ENCODE measurements at regions of chr10 and their contacts with region 1.

Region 1: GRCh38 chr10:22714479-22715289 is at the start of gene PIP4K2A:
- DNase-seq: peak; percentile 72
- H3K4me3 ChIP-seq: peak within 1 kb of the TSS; percentile 93 to 97 (median 97)
- H3K27ac ChIP-seq: peak within 1 kb of the TSS; percentile 65
- H3K4me1 ChIP-seq: peaks cover 14% of the 10 kb centered on the region
- H3K27me3 ChIP-seq: no peaks in the 10 kb centered on the region
- CTCF ChIP-seq: no peak
- total RNA-seq, gene PIP4K2A: 7.2 to 13.4 TPM

Region 2: DNA sequence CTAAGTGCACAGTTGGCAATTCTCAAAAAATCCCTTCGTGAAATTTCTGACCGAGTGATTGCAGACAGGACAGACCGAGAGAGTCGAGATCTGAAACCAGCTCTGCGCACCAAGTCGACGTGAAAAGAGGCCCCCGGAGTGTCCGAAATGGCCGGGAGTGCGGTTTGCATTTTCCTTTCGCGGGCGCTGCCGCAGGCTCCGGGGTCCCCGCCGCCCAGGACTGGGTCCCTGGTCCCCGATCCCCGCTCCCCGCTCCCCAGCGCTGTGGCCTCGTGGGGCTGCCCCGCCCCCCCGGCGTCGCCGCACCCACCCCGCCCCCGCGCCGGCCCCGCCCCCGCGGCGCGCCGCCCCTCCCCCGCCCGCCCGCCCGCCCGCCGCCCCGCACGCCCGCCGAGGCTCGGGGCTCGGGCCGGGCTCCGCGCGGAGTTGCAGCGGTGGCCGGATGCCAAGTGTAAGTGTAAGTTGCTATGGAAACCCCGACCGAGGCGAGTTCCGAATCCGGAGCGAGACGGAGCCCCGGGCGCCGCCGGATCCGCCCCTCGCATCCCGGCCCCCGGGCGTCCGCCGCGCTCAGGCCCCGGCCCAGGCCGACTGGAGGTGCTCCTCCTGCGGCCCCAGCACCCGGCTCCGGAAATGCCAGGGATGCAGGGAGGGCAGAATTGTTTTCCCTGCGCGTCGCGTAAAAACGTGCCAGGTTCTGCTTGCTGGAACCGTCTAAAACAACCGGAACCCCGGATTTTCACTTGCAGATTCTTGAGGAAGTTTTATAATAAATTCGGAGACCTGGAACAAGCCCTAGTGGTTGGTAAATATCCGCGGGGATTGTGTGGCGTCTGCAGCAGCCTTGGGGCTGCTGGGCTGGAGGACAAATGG is 389.2 kb before region 1 on chr10:
- CTCF ChIA-PET with region 1: no interaction called
- dilution Hi-C with region 1: no loop called
- in situ Hi-C with region 1: no loop called
- intact Hi-C with region 1: loop called (anchors 10 kb)
- DNase-seq: peak; percentile 60
- H3K4me3 ChIP-seq: peak overlapping the region; percentile 57 to 70 (median 65)
- H3K27ac ChIP-seq: peak overlapping the region; percentile 32
- H3K4me1 ChIP-seq: peaks cover 9% of the 10 kb centered on the region
- H3K27me3 ChIP-seq: peaks cover 12% of the 10 kb centered on the region
- CTCF ChIP-seq: peak in 1 of 2 donors; percentile 2

Region 3: GRCh38 chr10:22436884-22437619 is 277.6 kb before region 1 on chr10:
- CTCF ChIA-PET with region 1: no interaction called
- dilution Hi-C with region 1: no loop called
- in situ Hi-C with region 1: no loop called
- intact Hi-C with region 1: loop called (anchors 10 kb)
- DNase-seq: peak; percentile 77
- H3K4me3 ChIP-seq: peak overlapping the region; percentile 62 to 67 (median 66)
- H3K27ac ChIP-seq: peak overlapping the region; percentile 66
- H3K4me1 ChIP-seq: peaks cover 34% of the 10 kb centered on the region
- H3K27me3 ChIP-seq: no peaks in the 10 kb centered on the region
- CTCF ChIP-seq: peak in 1 of 2 donors; percentile 37

Region 4: DNA sequence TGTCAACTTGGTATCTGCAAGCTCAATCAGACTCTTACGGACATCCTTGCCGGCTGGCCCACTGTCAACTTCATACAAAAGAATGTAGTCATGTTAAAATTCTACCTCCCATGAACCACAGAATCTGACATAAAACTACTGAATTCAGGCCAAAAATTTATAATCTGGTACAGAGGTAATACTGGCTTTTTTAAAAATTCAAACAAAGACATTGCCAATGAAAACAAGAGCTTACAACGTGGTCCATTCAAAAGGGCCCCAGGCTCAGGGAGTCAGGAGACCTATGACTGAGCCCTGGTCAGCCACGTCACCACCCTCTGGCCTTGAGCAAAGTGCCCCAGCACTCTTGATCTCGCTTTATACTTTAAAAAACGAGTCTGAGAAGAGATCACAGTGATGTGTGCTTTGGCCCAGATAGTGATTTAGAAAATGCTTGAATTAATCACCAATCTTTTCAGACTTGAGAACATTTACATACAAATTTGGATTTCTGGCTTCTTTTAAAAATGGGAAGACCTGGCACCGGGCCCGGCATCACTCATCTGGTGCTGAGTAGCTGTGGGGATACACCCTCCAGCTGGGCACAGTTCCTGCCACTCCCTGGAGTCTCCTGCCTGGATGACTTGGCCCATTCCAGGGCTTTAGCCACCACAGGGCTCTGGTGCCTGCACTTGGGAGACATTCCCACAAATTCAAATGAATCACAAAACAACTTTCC is 94.4 kb before region 1 on chr10:
- CTCF ChIA-PET with region 1: no interaction called
- dilution Hi-C with region 1: no loop called
- in situ Hi-C with region 1: no loop called
- intact Hi-C with region 1: loop called (anchors 5 kb)
- DNase-seq: peak; percentile 93
- H3K4me3 ChIP-seq: peak overlapping the region in 1 of 3 experiments; percentile 8
- H3K27ac ChIP-seq: peak overlapping the region; percentile 89
- H3K4me1 ChIP-seq: peaks cover 42% of the 10 kb centered on the region
- H3K27me3 ChIP-seq: no peaks in the 10 kb centered on the region
- CTCF ChIP-seq: no peak

Region 5: DNA sequence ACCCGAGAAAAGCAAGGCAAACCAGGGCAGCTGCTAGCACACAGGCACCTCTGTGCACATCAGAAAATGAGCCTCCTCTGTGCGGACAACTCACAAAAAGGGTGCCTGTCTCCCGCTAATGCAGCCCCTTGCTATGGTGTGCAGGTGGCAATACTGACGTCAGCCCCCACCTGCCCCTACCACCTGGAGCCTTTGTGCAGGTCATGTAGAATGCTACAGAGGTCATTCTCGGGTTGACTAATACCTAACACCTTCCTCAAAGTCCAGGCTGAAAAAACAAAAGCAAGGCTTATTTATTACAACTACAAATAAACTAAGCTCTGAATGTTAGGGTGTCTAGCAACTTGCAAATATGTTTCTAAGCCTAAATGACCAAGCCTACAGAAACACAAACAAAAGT is 14.2 kb before region 1 on chr10:
- CTCF ChIA-PET with region 1: no interaction called
- dilution Hi-C with region 1: no loop called
- in situ Hi-C with region 1: no loop called
- intact Hi-C with region 1: no loop called
- DNase-seq: no peak
- H3K4me3 ChIP-seq: no peak overlapping the region
- H3K27ac ChIP-seq: no peak overlapping the region
- H3K4me1 ChIP-seq: no peaks in the 10 kb centered on the region
- H3K27me3 ChIP-seq: no peaks in the 10 kb centered on the region
- CTCF ChIP-seq: no peak

Region 6: GRCh38 chr10:23120001-23120934 is 405.6 kb after region 1 on chr10:
- CTCF ChIA-PET with region 1: no interaction called
- dilution Hi-C with region 1: no loop called
- in situ Hi-C with region 1: no loop called
- intact Hi-C with region 1: no loop called
- DNase-seq: no peak
- H3K4me3 ChIP-seq: no peak overlapping the region
- H3K27ac ChIP-seq: no peak overlapping the region
- H3K4me1 ChIP-seq: no peaks in the 10 kb centered on the region
- H3K27me3 ChIP-seq: no peaks in the 10 kb centered on the region
- CTCF ChIP-seq: no peak

Measured in mammary epithelial cell (primary cell).